Colonic mucosa (tissue), 4 donors: ENCODE measurements at regions of chr7 and their contacts with region 1.

Region 1: DNA sequence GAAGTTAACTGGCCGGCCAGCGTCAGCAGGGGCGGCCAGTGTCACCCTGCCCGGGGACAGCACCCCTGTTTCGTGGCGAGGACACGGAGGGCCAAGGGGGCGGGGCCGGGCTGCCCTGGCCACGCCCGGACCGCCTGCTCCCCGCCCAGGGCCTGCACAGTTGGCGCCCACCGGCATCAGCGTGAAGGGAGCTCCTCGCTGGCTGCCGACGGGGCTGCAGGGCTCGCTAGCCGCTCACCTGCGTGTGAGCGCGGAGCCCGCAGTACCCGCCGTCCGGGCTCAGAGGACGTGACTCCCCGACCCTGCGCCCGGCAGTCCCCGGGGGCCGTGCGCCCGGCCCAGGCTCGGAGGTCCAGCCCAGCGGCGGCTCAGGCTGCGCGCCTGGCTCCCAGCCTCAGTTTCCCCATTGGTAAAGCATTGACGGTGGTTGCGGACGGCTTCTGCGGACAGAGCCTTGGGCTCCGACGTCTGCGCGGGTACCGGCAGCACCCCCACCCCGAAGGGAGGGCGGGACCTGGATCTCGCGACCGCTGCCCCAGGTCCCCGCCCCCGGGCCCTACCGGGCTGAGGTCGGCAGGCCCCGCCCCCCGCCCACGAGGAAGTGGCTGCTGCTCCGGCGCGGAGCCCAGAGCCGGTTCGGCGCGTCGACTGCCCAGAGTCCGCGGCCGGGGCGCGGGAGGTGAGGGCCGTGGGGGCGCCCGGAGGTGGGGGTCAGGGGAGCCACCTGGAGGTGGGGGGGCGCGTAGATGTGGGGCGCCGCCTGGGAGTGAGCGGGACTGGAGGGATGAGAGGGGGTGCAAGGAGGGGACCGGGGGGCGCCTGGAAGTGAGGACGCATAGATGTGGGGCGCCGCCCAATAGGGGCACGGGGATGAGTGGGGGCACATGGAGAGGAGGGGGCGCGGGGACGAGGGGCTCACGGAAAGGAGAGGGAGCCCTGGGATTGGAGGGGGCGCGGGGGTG is at the start of gene ARPC1B:
- DNase-seq: peak; percentile 84
- H3K4me3 ChIP-seq: peak within 1 kb of the TSS; percentile 82
- H3K27ac ChIP-seq: peak within 1 kb of the TSS; percentile 92
- H3K4me1 ChIP-seq: peaks cover 8% of the 10 kb centered on the region
- H3K27me3 ChIP-seq: no peaks in the 10 kb centered on the region
- CTCF ChIP-seq: no peak
- total RNA-seq, gene ARPC1B: 141 to 143 TPM

Region 2: DNA sequence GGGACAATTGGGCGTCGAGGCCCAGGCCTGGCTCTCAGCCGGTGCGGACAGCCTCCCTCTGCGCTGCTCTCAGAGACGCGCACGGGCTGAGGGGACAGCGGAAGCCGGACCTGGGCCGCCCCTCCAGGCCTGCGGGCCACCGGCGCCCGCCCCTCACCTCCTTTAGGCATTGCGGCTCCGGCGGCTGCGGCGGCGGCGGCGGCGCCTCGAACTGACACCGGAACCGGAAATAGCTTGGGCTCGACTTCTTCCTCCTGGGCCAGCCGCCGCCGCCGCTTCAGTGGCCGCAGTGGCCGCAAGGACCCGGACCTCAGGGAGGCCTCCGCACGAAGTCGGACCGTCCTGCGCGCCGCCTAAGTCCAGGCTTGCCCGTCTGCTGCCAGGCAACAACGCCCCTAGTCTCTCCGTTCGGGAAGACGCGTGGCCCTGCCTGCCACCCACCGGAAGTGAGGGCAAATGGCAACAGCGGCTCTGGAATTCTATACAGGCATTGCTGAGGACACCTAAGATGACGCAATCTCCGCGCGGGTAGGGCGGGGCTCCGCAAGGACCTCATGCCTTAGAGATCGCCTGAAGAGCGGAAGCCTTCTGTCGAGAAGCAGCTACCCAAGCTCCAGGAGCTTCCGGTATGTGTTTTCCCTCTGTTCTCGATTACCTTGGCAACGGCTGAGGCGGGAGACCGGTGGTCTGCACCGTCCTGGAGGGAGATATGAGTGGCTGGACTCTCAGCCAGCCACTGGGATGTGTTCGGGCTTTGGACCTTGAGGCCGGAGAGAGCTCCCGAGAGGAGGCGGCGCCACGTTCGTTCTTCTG is 34.2 kb after region 1 on chr7 and contains the starts of genes BUD31 and PDAP1:
- intact Hi-C with region 1: loop called (anchors 5 kb)
- DNase-seq: peak; percentile 95
- H3K4me3 ChIP-seq: peak within 1 kb of the TSS; percentile 90
- H3K27ac ChIP-seq: peak within 1 kb of the TSS; percentile 88
- H3K4me1 ChIP-seq: peaks cover 12% of the 10 kb centered on the region
- H3K27me3 ChIP-seq: no peaks in the 10 kb centered on the region
- CTCF ChIP-seq: no peak
- total RNA-seq, gene BUD31: 82.8 to 113 TPM
- total RNA-seq, gene PDAP1: 79.7 to 133 TPM